ENCODE measurements at regions of chr18 and their contacts with region 1.

Region 1: DNA sequence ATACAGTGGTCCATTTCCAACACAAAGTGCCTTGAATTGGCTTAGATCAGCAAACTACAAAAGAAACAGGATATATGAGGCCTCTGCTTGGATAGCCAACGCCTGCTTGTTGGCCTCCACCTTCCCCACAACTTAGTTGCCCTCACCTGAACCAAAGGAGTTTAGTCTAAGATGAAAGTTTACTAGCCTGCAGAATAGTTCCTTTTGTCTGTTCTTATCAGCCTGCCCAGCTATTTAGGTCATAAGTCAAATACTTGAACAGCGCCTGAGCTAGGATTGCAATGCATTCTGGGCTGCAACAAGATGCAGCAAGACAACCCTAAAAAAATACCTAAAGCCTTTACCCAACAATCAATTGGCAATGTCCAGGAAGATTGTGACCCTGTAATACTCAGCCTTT is 13.1 kb upstream of the EPG5 start:
- DNase-seq: no peak
- ATAC-seq: no peak
- H3K4me3 ChIP-seq: no peak overlapping the region
- H3K27ac ChIP-seq: no peak overlapping the region
- H3K4me1 ChIP-seq: peaks cover 0 to 23% (median 0%) of the 10 kb centered on the region in 9 donors
- H3K27me3 ChIP-seq: no peaks in the 10 kb centered on the region
- CTCF ChIP-seq: no peak

Region 2: GRCh38 chr18:46035696-46036680 is 55.8 kb after region 1 on chr18:
- intact Hi-C with region 1: loop called in 2 of 10 experiments (anchors 10 kb)
- DNase-seq: no peak
- ATAC-seq: no peak
- H3K4me3 ChIP-seq: no peak overlapping the region
- H3K27ac ChIP-seq: no peak overlapping the region
- H3K4me1 ChIP-seq: peaks cover 0 to 34% (median 0%) of the 10 kb centered on the region in 9 donors
- H3K27me3 ChIP-seq: no peaks in the 10 kb centered on the region
- CTCF ChIP-seq: no peak

Region 3: DNA sequence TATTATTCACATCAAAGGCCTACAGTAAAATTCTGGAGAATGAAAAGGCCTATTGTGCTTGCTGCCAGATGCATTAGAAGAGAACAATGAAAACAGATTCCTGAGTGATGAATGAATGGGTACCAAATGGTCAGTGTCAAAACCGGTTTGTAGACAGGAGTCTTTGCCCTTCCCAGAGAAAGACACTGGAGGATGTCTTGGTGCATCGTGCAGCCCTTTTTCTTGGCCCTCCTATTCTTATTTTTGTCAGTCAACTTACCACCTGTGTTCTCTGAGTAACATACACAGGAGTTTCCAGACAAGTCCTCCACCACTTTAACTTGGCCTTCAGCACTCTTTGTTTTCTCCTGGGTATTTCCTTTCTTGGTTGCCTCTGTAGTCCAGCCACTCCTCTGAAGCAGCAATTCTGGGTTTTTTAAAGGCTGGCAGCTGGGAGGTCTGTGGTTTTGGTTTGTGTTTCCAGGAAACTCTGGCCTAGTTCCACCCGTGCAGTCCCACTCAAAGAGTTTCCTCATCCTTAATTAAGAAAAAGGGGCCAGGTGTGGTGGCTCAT is 62.4 kb after region 1 on chr18:
- intact Hi-C with region 1: loop called in 2 of 10 experiments (anchors 10 kb)
- DNase-seq: no peak
- ATAC-seq: peak in 3 of 8 donors; percentile 10 to 33 (median 26)
- H3K4me3 ChIP-seq: no peak overlapping the region
- H3K27ac ChIP-seq: no peak overlapping the region
- H3K4me1 ChIP-seq: peaks cover 0 to 27% (median 0%) of the 10 kb centered on the region in 9 donors
- H3K27me3 ChIP-seq: no peaks in the 10 kb centered on the region
- CTCF ChIP-seq: no peak

Region 4: DNA sequence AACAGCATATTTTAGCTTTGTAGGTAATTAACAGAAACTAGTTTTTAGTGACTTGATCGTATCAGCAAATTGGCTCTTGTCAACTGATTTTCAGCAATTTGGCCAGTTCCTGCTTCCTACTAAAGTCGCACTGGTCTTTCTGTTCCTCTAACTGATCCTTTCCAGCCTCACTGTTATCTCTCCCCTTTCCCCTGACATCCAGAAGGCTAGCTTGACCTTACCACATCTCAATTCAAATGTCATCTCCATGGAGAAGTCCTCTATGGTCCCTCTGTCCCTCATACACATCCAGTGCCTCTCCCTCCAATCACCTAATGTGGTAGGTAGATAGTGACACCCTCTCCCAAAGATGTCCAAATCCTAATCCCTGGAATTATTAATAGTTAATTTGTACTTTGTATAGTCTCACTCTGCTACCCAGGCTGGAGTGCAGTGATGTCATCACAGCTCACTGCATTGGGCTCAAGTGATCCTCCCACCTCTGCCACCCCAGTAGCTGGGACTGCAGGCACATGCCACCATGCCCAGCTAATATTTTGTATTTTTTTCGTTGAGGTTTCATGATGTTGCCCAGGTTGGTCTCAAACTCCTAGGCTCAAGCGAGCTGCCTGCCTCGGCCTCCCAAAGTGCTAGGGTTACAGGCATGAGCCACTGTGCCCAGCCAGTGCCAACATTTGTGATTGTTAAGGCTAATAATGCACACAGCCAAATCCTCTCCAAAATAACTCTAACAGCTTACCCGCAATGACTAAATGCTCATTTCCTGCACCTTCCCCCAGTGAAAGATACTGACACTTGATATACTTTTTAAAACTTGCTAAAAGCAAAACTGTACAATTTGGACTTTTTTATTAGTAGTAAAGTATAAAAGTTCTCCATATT is 75.0 kb after region 1 on chr18:
- intact Hi-C with region 1: no loop called
- DNase-seq: no peak
- ATAC-seq: no peak
- H3K4me3 ChIP-seq: no peak overlapping the region
- H3K27ac ChIP-seq: peak overlapping the region in 1 of 10 donors; percentile 61
- H3K4me1 ChIP-seq: peaks cover 0 to 44% (median 0%) of the 10 kb centered on the region in 9 donors
- H3K27me3 ChIP-seq: no peaks in the 10 kb centered on the region
- CTCF ChIP-seq: no peak

Measured in heart right ventricle (tissue), 16 donors.